Transverse colon (tissue), 4 donors: ENCODE measurements at regions of chr12 and their contacts with region 1.

Region 1: GRCh38 chr12:116455540-116456329 is 103.4 kb upstream of the MAP1LC3B2 start:
- DNase-seq: peak; percentile 79
- H3K4me3 ChIP-seq: no peak overlapping the region
- H3K27ac ChIP-seq: peak overlapping the region; percentile 73 to 86 (median 84)
- H3K4me1 ChIP-seq: peaks cover 9 to 27% (median 22%) of the 10 kb centered on the region in 4 donors
- H3K27me3 ChIP-seq: no peaks in the 10 kb centered on the region
- CTCF ChIP-seq: no peak
- EP300 ChIP-seq: peak; percentile 85
- POLR2A ChIP-seq: no peak

Region 2: DNA sequence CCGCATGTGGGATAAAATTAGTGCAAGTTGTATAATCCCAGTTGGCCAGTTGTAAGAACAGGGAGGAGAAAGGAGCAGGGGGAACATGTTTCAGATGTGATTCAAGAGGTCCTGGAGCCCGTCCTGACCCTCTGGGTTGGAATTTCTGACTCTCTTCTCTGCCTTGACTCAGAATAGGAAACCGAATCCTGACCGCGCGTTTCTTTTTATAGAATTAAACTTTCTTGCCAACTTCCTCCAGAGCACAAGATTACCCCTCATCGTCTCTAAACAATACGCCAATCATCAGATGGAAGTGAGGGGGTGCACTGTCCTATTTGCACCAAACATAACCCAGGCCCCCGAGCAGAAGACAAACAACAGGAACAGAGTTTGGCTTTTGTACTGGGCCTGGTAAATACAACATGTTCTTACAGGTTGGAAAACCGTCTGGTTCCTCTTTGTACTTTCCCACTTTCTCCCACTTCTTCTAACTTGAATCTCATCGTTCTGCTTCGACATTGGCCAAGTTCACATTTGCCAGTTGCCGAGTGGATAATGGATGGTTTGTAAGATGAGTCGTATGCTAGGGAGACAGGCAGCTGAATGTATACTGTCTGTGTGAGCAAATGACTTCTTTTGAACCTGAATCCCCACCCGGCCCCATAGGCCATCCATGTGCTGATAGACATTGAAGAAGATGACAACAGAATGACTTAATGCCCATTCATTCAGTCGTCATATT is 135.7 kb before region 1 on chr12:
- in situ Hi-C with region 1: no loop called
- intact Hi-C with region 1: loop called (anchors 5 kb)
- DNase-seq: peak; percentile 53
- H3K4me3 ChIP-seq: no peak overlapping the region
- H3K27ac ChIP-seq: peak overlapping the region; percentile 71 to 83 (median 78)
- H3K4me1 ChIP-seq: peaks cover 0 to 24% (median 5%) of the 10 kb centered on the region in 4 donors
- H3K27me3 ChIP-seq: no peaks in the 10 kb centered on the region
- CTCF ChIP-seq: no peak
- EP300 ChIP-seq: peak; percentile 79
- POLR2A ChIP-seq: no peak

Region 3: DNA sequence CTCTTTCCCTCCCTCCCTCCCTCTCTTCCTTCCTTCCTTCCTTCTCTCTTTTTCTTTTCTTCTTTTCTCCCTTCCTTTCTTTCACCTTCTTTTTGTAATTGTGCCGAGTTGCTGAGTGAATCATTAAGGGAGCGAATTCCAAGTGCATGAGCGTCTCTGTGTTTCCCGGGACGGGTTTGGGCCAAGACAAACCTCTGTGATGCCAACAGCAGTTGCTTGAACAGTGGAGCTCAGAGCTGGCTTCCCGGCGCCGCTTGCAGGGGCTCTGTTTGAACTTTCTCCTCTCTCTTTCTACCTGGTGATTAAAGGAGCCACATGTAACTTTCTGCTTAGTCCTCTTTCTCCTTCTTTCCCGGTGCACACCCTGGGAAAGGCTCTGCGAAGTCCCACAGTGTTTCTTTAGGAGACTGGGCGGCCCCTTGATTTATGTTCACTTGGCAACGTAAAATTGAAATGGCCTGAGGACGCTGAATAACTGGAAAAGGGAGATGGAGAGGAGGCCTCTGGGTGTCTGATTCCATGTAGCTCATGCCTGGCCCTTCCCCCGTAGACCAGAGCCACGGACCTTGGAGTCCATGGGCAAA is 69.8 kb after region 1 on chr12:
- in situ Hi-C with region 1: no loop called
- intact Hi-C with region 1: loop called (anchors 5 kb)
- DNase-seq: peak; percentile 45
- H3K4me3 ChIP-seq: no peak overlapping the region
- H3K27ac ChIP-seq: peak overlapping the region; percentile 72 to 81 (median 76)
- H3K4me1 ChIP-seq: peaks cover 4 to 33% (median 13%) of the 10 kb centered on the region in 4 donors
- H3K27me3 ChIP-seq: no peaks in the 10 kb centered on the region
- CTCF ChIP-seq: no peak
- EP300 ChIP-seq: no peak
- POLR2A ChIP-seq: no peak

Region 4: DNA sequence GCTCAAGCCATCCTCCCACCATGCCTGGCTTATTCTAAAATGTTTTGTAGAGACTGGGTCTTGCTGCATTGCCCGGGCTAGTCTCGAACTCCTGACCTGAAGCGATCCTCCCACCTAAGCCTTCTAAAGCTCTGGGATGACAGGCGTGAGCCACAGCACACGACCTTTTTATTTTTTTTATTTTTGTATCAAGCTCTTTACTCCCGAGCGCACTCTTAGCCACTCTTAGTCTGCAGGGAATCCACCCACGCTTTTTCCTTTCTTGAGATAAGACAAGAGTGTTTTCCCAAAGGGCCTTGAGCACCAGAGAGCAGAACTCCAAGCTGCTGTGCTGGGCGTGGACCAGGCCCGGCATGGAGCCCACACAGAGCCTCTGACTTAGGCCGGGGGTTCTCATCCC is 126.9 kb after region 1 on chr12:
- in situ Hi-C with region 1: no loop called
- intact Hi-C with region 1: loop called (anchors 10 kb)
- DNase-seq: no peak
- H3K4me3 ChIP-seq: no peak overlapping the region
- H3K27ac ChIP-seq: no peak overlapping the region
- H3K4me1 ChIP-seq: no peaks in the 10 kb centered on the region
- H3K27me3 ChIP-seq: no peaks in the 10 kb centered on the region
- CTCF ChIP-seq: no peak
- EP300 ChIP-seq: no peak
- POLR2A ChIP-seq: no peak